Left lung (tissue), 14 donors: ENCODE measurements at regions of chr12 and their contacts with region 1.

Region 1: DNA sequence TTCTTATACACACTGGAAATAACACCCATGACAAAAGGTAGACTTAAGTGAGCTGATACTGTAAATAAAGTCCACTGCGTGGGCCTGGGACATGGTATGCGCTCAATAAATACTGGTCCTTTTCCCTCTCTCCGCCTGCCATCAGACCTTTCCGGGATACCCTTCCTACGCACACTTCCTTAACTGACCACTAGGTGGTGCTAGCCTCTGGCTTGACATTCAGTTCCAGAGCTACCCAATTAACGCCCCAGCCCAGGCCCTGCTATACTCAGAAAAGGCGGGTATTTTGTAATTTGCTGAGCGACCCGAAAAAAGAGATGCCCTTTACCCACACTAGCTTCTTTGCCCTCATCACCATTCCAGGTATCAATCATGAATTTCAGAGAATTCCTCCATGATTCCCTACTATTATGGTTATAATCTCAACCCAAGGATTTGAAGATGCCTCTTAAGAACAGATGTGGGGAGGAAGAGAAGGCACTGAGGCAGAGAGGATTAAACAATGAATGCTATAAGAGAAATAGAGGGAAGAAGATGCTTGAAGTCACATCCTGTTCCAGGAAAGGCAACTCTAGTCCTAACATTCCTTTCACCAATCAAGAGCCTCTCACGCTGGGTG is 3.9 kb upstream of the LRP1 start:
- DNase-seq: peak in 3 of 4 donors; percentile 66 to 81 (median 73)
- ATAC-seq: peak; percentile 43
- H3K4me3 ChIP-seq: no peak overlapping the region
- H3K27ac ChIP-seq: no peak overlapping the region
- H3K4me1 ChIP-seq: peaks cover 4 to 24% of the 10 kb centered on the region in 2 donors
- H3K27me3 ChIP-seq: peaks cover 0 to 44% of the 10 kb centered on the region in 2 donors
- CTCF ChIP-seq: peak; percentile 93 to 94

Region 2: DNA sequence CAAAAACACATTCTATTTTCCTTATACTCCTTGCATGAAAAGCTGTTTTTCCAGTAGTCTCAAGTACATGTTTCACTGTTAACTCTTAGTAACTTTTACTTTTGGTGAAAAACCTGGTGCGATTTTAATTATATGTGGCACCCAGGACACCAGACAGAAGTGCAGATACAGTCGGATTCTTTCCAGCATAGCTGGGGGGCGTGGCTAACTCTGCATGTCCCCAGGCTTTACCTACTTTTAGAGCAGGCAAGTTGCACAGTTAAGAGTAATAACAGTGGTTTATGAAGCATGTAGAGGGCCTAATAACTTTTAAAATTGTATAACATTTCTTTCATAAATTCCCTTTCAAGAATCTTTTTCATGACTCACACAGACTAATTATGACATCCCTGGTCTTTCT is 290.6 kb before region 1 on chr12:
- intact Hi-C with region 1: no loop called
- DNase-seq: no peak
- ATAC-seq: peak; percentile 13
- H3K4me3 ChIP-seq: no peak overlapping the region
- H3K27ac ChIP-seq: no peak overlapping the region
- H3K4me1 ChIP-seq: peaks cover 0 to 20% of the 10 kb centered on the region in 2 donors
- H3K27me3 ChIP-seq: no peaks in the 10 kb centered on the region
- CTCF ChIP-seq: no peak

Region 3: GRCh38 chr12:57078519-57079404 is 45.6 kb before region 1 on chr12 and contains the start of gene NEMP1:
- intact Hi-C with region 1: no loop called
- DNase-seq: peak; percentile 94 to 100 (median 98)
- ATAC-seq: peak; percentile 99
- H3K4me3 ChIP-seq: peak within 1 kb of the TSS; percentile 77 to 90
- H3K27ac ChIP-seq: peak within 1 kb of the TSS; percentile 87 to 90
- H3K4me1 ChIP-seq: peaks cover 10 to 20% of the 10 kb centered on the region in 2 donors
- H3K27me3 ChIP-seq: no peaks in the 10 kb centered on the region
- CTCF ChIP-seq: peak in 1 of 2 donors; percentile 9
- polyA plus RNA-seq, gene NEMP1: 21.5 to 29.2 (median 28.0) TPM

Region 4: GRCh38 chr12:57182921-57183790 is 58.8 kb after region 1 on chr12:
- intact Hi-C with region 1: loop called (anchors 5 to 10 kb)
- DNase-seq: peak in 3 of 4 donors; percentile 56 to 74 (median 74)
- ATAC-seq: peak; percentile 91
- H3K4me3 ChIP-seq: no peak overlapping the region
- H3K27ac ChIP-seq: no peak overlapping the region
- H3K4me1 ChIP-seq: no peaks in the 10 kb centered on the region
- H3K27me3 ChIP-seq: no peaks in the 10 kb centered on the region
- CTCF ChIP-seq: peak; percentile 71 to 92